HCT116 (cell line): ENCODE measurements at regions of chr15 and their contacts with region 1.

Region 1: DNA sequence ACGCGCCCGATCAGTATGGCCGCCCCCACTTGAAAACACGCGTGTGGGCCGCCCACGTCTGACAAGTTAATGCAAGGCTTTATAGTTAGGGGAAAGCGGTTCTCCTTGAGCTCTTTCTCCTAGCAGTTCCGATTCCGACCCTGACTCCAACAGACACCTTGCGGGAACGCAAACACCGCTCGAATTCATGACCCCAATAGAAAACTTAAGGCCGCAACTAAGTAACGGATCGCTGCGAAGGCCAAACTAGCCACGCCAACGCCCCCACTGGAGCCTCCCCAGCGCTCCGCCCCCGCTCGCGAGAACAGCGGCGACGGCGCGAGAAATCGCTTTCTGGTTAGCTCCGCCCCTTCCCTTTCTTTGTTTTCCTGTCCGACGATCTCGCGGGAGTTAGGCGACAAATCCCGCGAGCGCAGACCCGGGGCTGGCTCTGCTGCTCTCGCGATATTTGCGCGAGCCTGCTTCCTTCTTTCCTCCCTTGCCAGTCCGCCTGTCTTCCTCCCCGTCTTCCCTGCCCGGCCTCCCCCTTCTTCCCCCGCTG is at the start of gene IREB2:
- DNase-seq: peak; percentile 97
- ATAC-seq: peak; percentile 95
- H3K4me3 ChIP-seq: peak within 1 kb of the TSS; percentile 91
- H3K27ac ChIP-seq: peak within 1 kb of the TSS; percentile 88
- H3K4me1 ChIP-seq: peaks cover 7 to 18% of the 10 kb centered on the region in 2 experiments; a peak in 3 of 4 replicates
- H3K27me3 ChIP-seq: no peaks in the 10 kb centered on the region
- CTCF ChIP-seq: no peak
- POLR2A ChIP-seq: peak; percentile 38
- RAD21 ChIP-seq: no peak
- total RNA-seq, gene IREB2: 57.6 TPM

Region 2: GRCh38 chr15:78422571-78423340 is 15.1 kb before region 1 on chr15:
- CTCF ChIA-PET with region 1: interaction called, 11 read pairs
- POLR2A ChIA-PET with region 1: interaction called, 14 read pairs
- RAD21 ChIA-PET with region 1: no interaction called
- intact Hi-C with region 1: no loop called
- DNase-seq: peak; percentile 47
- ATAC-seq: peak; percentile 96
- H3K4me3 ChIP-seq: no peak overlapping the region
- H3K27ac ChIP-seq: no peak overlapping the region
- H3K4me1 ChIP-seq: peaks cover 0 to 14% of the 10 kb centered on the region in 2 experiments; a peak in 1 of 4 replicates
- H3K27me3 ChIP-seq: no peaks in the 10 kb centered on the region
- CTCF ChIP-seq: peak; percentile 61 to 98 (median 97)
- POLR2A ChIP-seq: no peak
- RAD21 ChIP-seq: peak; percentile 65

Region 3: DNA sequence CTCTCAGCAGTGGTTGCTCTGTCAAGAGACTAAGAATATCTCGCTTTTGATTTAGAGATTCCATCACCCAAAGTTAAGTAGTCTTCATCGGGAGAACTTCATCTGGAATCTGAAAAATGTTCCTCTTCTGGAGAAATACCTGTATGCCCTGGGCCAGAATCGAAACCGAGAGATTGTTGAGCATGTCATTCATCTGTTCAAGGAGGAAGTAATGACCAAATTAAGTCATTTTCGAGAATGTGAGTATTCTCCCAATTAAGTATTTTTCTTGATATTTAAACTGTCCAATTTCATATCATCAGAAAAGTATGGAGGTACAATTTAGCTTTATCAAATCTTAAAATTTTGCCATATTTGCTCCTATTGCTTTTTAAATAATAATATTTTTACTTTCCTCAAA is 89.5 kb after region 1 on chr15:
- CTCF ChIA-PET with region 1: no interaction called
- POLR2A ChIA-PET with region 1: no interaction called
- RAD21 ChIA-PET with region 1: no interaction called
- intact Hi-C with region 1: no loop called
- DNase-seq: no peak
- ATAC-seq: no peak
- H3K4me3 ChIP-seq: no peak overlapping the region
- H3K27ac ChIP-seq: no peak overlapping the region
- H3K4me1 ChIP-seq: no peaks in the 10 kb centered on the region
- H3K27me3 ChIP-seq: no peaks in the 10 kb centered on the region
- CTCF ChIP-seq: no peak
- POLR2A ChIP-seq: no peak
- RAD21 ChIP-seq: no peak